ENCODE measurements at regions of chr7 and their contacts with region 1.

Region 1: GRCh38 chr7:10939911-10940703 is 33.6 kb upstream of the PHF14 start:
- DNase-seq: peak; percentile 93
- ATAC-seq: peak; percentile 91
- H3K4me3 Mint-ChIP-seq: no peak overlapping the region
- H3K27ac Mint-ChIP-seq: no peak overlapping the region
- H3K4me1 Mint-ChIP-seq: peaks cover 35% of the 10 kb centered on the region
- H3K27me3 Mint-ChIP-seq: no peaks in the 10 kb centered on the region

Region 2: GRCh38 chr7:10973061-10973944 is 33.2 kb after region 1 on chr7 and contains the start of gene PHF14:
- CTCF ChIA-PET with region 1: interaction called, 4 read pairs
- POLR2A ChIA-PET with region 1: interaction called, 25 read pairs
- intact Hi-C with region 1: loop called (anchors 1 kb)
- DNase-seq: peak; percentile 98
- ATAC-seq: peak; percentile 99
- H3K4me3 Mint-ChIP-seq: peak within 1 kb of the TSS; percentile 88
- H3K27ac Mint-ChIP-seq: peak within 1 kb of the TSS; percentile 93
- H3K4me1 Mint-ChIP-seq: peaks cover 39% of the 10 kb centered on the region
- H3K27me3 Mint-ChIP-seq: peaks cover 2% of the 10 kb centered on the region
- total RNA-seq, gene PHF14: 37.4 to 40.3 TPM

Region 3: GRCh38 chr7:11006291-11006690 is 66.2 kb after region 1 on chr7:
- CTCF ChIA-PET with region 1: no interaction called
- POLR2A ChIA-PET with region 1: no interaction called
- intact Hi-C with region 1: no loop called
- DNase-seq: no peak
- ATAC-seq: no peak
- H3K4me3 Mint-ChIP-seq: no peak overlapping the region
- H3K27ac Mint-ChIP-seq: no peak overlapping the region
- H3K4me1 Mint-ChIP-seq: peaks cover 14% of the 10 kb centered on the region
- H3K27me3 Mint-ChIP-seq: no peaks in the 10 kb centered on the region

Region 4: GRCh38 chr7:11212080-11212711 is 272.1 kb after region 1 on chr7:
- CTCF ChIA-PET with region 1: interaction called, 6 read pairs
- POLR2A ChIA-PET with region 1: no interaction called
- intact Hi-C with region 1: loop called (anchors 2 to 10 kb)
- DNase-seq: peak; percentile 62
- ATAC-seq: peak; percentile 60
- H3K4me3 Mint-ChIP-seq: no peak overlapping the region
- H3K27ac Mint-ChIP-seq: no peak overlapping the region
- H3K4me1 Mint-ChIP-seq: peaks cover 4% of the 10 kb centered on the region
- H3K27me3 Mint-ChIP-seq: peaks cover 2% of the 10 kb centered on the region

Measured in activated CD4-positive, alpha-beta T cell treated with anti-CD3 and anti-CD28 coated beads for 36 hours (primary cell).